ENCODE measurements at regions of chr1 and their contacts with region 1.

Region 1: DNA sequence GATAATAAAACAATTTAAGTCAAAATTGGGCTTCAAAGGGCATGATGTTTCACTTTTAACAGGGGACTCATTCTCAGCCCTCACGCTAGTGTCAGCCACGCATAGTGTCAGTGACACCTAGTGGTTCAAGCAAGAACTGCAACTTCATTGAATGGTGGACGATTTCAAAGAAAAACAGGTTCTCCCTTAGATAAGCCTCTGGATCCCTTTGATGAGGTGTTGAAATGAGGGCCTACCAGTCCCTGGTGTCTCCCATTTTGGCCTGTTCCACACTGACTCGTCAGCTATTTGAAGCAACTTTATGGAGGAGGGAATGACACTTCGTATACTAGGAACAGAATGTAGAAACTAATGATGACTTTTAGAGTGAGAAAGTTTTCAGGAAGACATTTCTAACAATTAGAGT is 56.2 kb downstream of the FCRL5 start:
- DNase-seq: no peak
- ATAC-seq: peak in 3 of 4 donors; percentile 43 to 67 (median 61)
- H3K4me3 ChIP-seq: no peak overlapping the region
- H3K27ac ChIP-seq: no peak overlapping the region
- H3K4me1 ChIP-seq: no peaks in the 10 kb centered on the region
- H3K27me3 ChIP-seq: peaks cover 0 to 2% (median 0%) of the 10 kb centered on the region in 3 donors
- CTCF ChIP-seq: peak; percentile 80

Region 2: DNA sequence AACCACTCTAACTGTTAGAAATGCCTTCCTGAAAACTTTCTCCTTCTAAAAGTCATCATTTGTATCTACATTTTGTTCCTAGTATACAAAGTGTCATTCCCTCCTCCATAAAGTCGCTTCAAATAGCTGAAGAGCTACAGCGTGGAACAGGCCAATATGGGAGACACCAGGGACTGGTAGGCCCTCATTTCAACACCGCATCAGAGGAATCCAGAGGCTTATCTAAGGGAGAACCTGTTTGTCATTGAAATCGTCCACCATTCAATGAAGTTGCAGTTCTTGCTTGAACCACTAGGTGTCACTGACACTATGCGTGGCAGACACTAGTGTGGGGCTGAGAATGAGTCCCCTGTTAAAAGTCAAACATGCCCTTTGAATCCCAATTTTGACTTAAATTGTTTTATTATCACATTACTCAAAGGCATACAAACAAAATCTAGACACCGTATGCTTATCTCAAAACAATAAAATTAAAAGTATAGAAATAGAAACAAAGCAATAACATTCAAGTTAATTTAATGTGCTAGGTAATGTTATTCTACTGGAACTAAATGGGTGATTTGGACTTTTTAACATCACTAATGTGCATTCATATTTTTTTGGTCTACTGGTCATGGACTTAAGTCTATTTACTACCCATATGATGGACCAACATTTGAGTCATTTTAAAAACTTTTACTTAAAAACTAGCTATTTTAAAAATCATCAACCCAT is 126.2 kb before region 1 on chr1:
- intact Hi-C with region 1: loop called (anchors 2 to 5 kb)
- DNase-seq: no peak
- ATAC-seq: peak in 3 of 4 donors; percentile 54 to 61 (median 55)
- H3K4me3 ChIP-seq: no peak overlapping the region
- H3K27ac ChIP-seq: no peak overlapping the region
- H3K4me1 ChIP-seq: no peaks in the 10 kb centered on the region
- H3K27me3 ChIP-seq: no peaks in the 10 kb centered on the region
- CTCF ChIP-seq: peak; percentile 90

Region 3: DNA sequence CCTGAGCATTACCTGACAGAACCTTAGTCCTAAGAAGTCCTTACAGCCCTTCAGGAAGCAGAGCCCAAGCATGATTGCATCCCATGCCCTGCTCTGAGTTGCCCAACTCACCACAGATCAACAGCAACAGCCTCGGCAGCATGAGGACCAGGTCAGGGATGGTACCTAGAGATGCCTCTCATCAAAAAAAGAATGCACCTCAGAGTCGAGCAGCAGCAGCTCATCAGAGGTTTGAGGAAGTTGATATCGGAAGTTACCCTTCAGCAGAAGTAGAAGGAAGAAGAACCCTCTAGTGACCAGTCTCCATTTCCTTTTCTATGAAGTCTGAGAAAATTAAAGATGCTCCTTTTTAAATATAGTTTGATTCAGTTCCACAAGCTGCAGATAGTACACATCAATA is 323.8 kb after region 1 on chr1 and contains the start of gene FCRL1:
- intact Hi-C with region 1: no loop called
- DNase-seq: no peak
- ATAC-seq: no peak
- H3K4me3 ChIP-seq: no peak within 1 kb of the TSS
- H3K27ac ChIP-seq: no peak within 1 kb of the TSS
- H3K4me1 ChIP-seq: no peaks in the 10 kb centered on the region
- H3K27me3 ChIP-seq: peaks cover 0 to 3% (median 0%) of the 10 kb centered on the region in 3 donors
- CTCF ChIP-seq: no peak
- total RNA-seq, gene FCRL1: 0.40 TPM in 1 of 4 donors, not detected in the others

Measured in psoas muscle (tissue), 8 donors.